ENCODE measurements at regions of chr14 and their contacts with region 1.

Region 1: DNA sequence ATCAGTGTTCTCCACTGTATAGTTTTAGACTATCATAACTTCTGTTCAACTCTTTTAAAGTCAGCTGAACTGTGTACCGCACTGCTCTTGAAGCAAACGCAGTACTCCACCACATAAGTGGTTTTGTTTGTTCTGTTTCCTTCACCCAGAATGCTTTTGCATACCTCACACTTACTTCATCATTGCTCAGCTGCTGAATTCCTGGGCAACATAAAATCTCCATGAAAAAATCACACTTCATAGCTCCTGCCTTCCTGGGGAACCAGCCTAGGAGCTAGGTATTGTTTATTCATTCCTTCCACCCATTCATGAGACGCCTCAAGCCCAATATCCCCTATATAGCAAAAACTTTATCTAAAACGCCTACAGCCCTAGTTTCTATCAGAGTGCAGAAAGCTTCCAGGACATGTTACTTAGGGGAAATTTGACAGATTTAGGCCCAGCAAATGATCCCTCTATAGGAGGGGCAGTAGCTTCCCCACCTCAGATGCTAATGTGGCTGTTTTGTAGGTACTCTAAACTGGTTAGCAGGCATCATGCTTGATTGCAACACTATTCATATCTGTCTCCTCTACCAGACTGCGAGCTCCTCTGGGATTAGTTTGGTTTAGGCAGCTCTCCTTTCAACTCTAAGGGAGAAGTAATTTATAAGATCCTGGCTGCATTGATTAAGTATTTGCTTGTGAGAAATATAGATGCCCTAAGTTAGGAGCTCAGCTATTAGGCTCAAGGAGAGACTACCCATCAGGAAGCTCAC is 44.5 kb downstream of the LRRC9 start:
- DNase-seq: no peak
- H3K4me3 ChIP-seq: no peak overlapping the region
- H3K27ac ChIP-seq: no peak overlapping the region
- H3K4me1 ChIP-seq: peaks cover 3% of the 10 kb centered on the region
- H3K27me3 ChIP-seq: no peaks in the 10 kb centered on the region
- CTCF ChIP-seq: no peak

Region 2: GRCh38 chr14:59116984-59117415 is 847.4 kb before region 1 on chr14:
- CTCF ChIA-PET with region 1: interaction called, 12 read pairs
- POLR2A ChIA-PET with region 1: no interaction called
- intact Hi-C with region 1: no loop called
- DNase-seq: no peak
- H3K4me3 ChIP-seq: no peak overlapping the region
- H3K27ac ChIP-seq: no peak overlapping the region
- H3K4me1 ChIP-seq: no peaks in the 10 kb centered on the region
- H3K27me3 ChIP-seq: no peaks in the 10 kb centered on the region
- CTCF ChIP-seq: no peak

Region 3: GRCh38 chr14:60079724-60080123 is 115.3 kb after region 1 on chr14:
- CTCF ChIA-PET with region 1: no interaction called
- POLR2A ChIA-PET with region 1: no interaction called
- intact Hi-C with region 1: no loop called
- DNase-seq: peak; percentile 4
- H3K4me3 ChIP-seq: no peak overlapping the region
- H3K27ac ChIP-seq: no peak overlapping the region
- H3K4me1 ChIP-seq: no peaks in the 10 kb centered on the region
- H3K27me3 ChIP-seq: no peaks in the 10 kb centered on the region
- CTCF ChIP-seq: peak; percentile 35; the same call in 1 of the 2 replicates